HepG2 (cell line): ENCODE measurements at regions of chr20 and their contacts with region 1.

Region 1: GRCh38 chr20:22691369-22692118 is 107.2 kb upstream of the FOXA2 start:
- DNase-seq: peak; percentile 68
- ATAC-seq: peak; percentile 96
- H3K4me3 ChIP-seq: peak overlapping the region in 2 of 3 experiments; percentile 8 to 58; a peak in 3 of 6 replicates
- H3K27ac ChIP-seq: no peak overlapping the region
- H3K4me1 ChIP-seq: peaks cover 13% of the 10 kb centered on the region
- H3K27me3 ChIP-seq: peaks cover 1 to 9% of the 10 kb centered on the region in 2 experiments; a peak in 2 of 5 replicates
- CTCF ChIP-seq: peak; percentile 97
- EP300 ChIP-seq: no peak
- POLR2A ChIP-seq: no peak
- RAD21 ChIP-seq: peak; percentile 93

Region 2: GRCh38 chr20:22546344-22546743 is 145.2 kb before region 1 on chr20:
- CTCF ChIA-PET with region 1: no interaction called
- POLR2A ChIA-PET with region 1: no interaction called
- in situ Hi-C with region 1: no loop called
- intact Hi-C with region 1: no loop called
- DNase-seq: no peak
- ATAC-seq: no peak
- H3K4me3 ChIP-seq: no peak overlapping the region
- H3K27ac ChIP-seq: no peak overlapping the region
- H3K4me1 ChIP-seq: peaks cover 47% of the 10 kb centered on the region
- H3K27me3 ChIP-seq: no peaks in the 10 kb centered on the region; a peak in 1 of 5 replicates
- CTCF ChIP-seq: no peak
- EP300 ChIP-seq: no peak
- POLR2A ChIP-seq: no peak
- RAD21 ChIP-seq: no peak

Region 3: GRCh38 chr20:22974353-22974752 is 282.8 kb after region 1 on chr20:
- CTCF ChIA-PET with region 1: interaction called, 15 read pairs
- POLR2A ChIA-PET with region 1: no interaction called
- in situ Hi-C with region 1: loop called (anchors 10 kb)
- intact Hi-C with region 1: loop called (anchors 1 kb)
- DNase-seq: peak; percentile 24
- ATAC-seq: peak; percentile 69
- H3K4me3 ChIP-seq: no peak overlapping the region
- H3K27ac ChIP-seq: no peak overlapping the region
- H3K4me1 ChIP-seq: no peaks in the 10 kb centered on the region
- H3K27me3 ChIP-seq: no peaks in the 10 kb centered on the region; a peak in 1 of 5 replicates
- CTCF ChIP-seq: peak; percentile 32; the same call in 1 of the 2 replicates
- EP300 ChIP-seq: no peak
- POLR2A ChIP-seq: no peak
- RAD21 ChIP-seq: peak; percentile 44; the same call in 1 of the 2 replicates

Region 4: GRCh38 chr20:23079016-23079351 is 387.4 kb after region 1 on chr20:
- CTCF ChIA-PET with region 1: no interaction called
- POLR2A ChIA-PET with region 1: no interaction called
- in situ Hi-C with region 1: no loop called
- intact Hi-C with region 1: loop called (anchors 10 kb)
- DNase-seq: peak; percentile 16
- ATAC-seq: peak; percentile 80
- H3K4me3 ChIP-seq: no peak overlapping the region
- H3K27ac ChIP-seq: no peak overlapping the region
- H3K4me1 ChIP-seq: no peaks in the 10 kb centered on the region
- H3K27me3 ChIP-seq: no peaks in the 10 kb centered on the region
- CTCF ChIP-seq: peak; percentile 70
- EP300 ChIP-seq: no peak
- POLR2A ChIP-seq: no peak
- RAD21 ChIP-seq: no peak

Region 5: DNA sequence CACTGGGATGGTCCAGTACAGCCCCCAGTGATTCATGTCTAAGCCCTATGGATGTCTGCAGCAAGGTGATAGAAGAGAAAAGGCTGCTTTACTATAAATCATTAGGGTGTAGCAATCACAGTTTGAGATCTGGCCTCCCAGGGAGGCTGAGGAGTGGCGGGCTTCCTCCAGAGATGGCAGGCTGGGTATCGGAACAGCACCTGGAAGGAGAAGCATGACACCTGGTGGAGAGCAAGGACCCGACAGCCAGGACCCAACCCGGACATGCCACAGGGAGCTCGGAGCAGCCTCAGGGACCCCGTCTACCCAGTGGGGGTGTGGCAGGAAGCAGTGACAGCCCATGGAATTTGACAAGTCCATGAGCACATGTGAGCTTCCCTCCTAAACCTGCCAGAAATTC is 509.4 kb after region 1 on chr20:
- CTCF ChIA-PET with region 1: interaction called, 8 read pairs
- POLR2A ChIA-PET with region 1: no interaction called
- in situ Hi-C with region 1: loop called (anchors 5 kb)
- intact Hi-C with region 1: no loop called
- DNase-seq: peak; percentile 62
- ATAC-seq: peak; percentile 97
- H3K4me3 ChIP-seq: no peak overlapping the region
- H3K27ac ChIP-seq: no peak overlapping the region
- H3K4me1 ChIP-seq: no peaks in the 10 kb centered on the region
- H3K27me3 ChIP-seq: peaks cover 0 to 14% of the 10 kb centered on the region in 2 experiments; a peak in 2 of 5 replicates
- CTCF ChIP-seq: peak; percentile 92
- EP300 ChIP-seq: no peak
- POLR2A ChIP-seq: no peak
- RAD21 ChIP-seq: peak; percentile 92

Region 6: GRCh38 chr20:23245553-23246181 is 554.1 kb after region 1 on chr20:
- CTCF ChIA-PET with region 1: no interaction called
- POLR2A ChIA-PET with region 1: no interaction called
- in situ Hi-C with region 1: no loop called
- intact Hi-C with region 1: loop called (anchors 5 kb)
- DNase-seq: peak; percentile 52
- ATAC-seq: peak; percentile 95
- H3K4me3 ChIP-seq: no peak overlapping the region
- H3K27ac ChIP-seq: no peak overlapping the region
- H3K4me1 ChIP-seq: no peaks in the 10 kb centered on the region
- H3K27me3 ChIP-seq: no peaks in the 10 kb centered on the region
- CTCF ChIP-seq: peak; percentile 87
- EP300 ChIP-seq: no peak
- POLR2A ChIP-seq: no peak
- RAD21 ChIP-seq: no peak

Region 7: GRCh38 chr20:23320317-23320716 is 628.8 kb after region 1 on chr20:
- CTCF ChIA-PET with region 1: interaction called, 3 read pairs
- POLR2A ChIA-PET with region 1: no interaction called
- in situ Hi-C with region 1: no loop called
- intact Hi-C with region 1: loop called (anchors 5 kb)
- DNase-seq: peak; percentile 47
- ATAC-seq: peak; percentile 89
- H3K4me3 ChIP-seq: no peak overlapping the region
- H3K27ac ChIP-seq: no peak overlapping the region
- H3K4me1 ChIP-seq: no peaks in the 10 kb centered on the region
- H3K27me3 ChIP-seq: no peaks in the 10 kb centered on the region
- CTCF ChIP-seq: peak; percentile 45
- EP300 ChIP-seq: no peak
- POLR2A ChIP-seq: no peak
- RAD21 ChIP-seq: 0 out of 2 replicates have a peak, but pooled peaks have one; percentile 13

Region 8: DNA sequence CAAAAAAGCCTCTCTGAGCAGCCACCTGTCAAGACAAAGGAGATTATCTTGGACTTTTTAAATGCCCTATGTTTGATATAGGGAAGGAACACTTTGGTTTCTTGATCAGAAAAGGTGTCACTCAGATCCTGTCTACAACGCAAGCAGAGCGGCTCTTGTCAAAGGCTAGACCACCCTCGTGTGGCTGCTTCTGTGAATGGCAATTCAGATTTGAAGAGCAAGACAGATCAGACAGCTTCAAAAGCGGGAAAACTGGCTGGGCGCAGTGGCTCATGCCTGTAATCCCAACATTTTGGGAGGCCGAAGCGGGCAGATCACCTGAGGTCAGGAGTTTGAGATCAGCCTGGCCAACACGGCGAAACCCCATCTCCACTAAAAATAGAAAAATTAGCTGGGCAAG is 649.0 kb after region 1 on chr20:
- CTCF ChIA-PET with region 1: interaction called, 12 read pairs
- POLR2A ChIA-PET with region 1: interaction called, 6 read pairs
- in situ Hi-C with region 1: loop called (anchors 5 kb)
- intact Hi-C with region 1: loop called (anchors 1 kb)
- DNase-seq: peak; percentile 77
- ATAC-seq: peak; percentile 85
- H3K4me3 ChIP-seq: no peak overlapping the region
- H3K27ac ChIP-seq: no peak overlapping the region
- H3K4me1 ChIP-seq: peaks cover 27% of the 10 kb centered on the region
- H3K27me3 ChIP-seq: no peaks in the 10 kb centered on the region; a peak in 1 of 5 replicates
- CTCF ChIP-seq: peak; percentile 96
- EP300 ChIP-seq: no peak
- POLR2A ChIP-seq: no peak
- RAD21 ChIP-seq: peak; percentile 90